PC-3 (cell line): ENCODE measurements at regions of chr16 and their contacts with region 1.

Region 1: GRCh38 chr16:87391950-87392822 is at the start of gene MAP1LC3B:
- DNase-seq: peak; percentile 94
- ATAC-seq: peak; percentile 61
- H3K4me3 ChIP-seq: peak within 1 kb of the TSS; percentile 96
- H3K27ac ChIP-seq: peak within 1 kb of the TSS; percentile 59
- H3K4me1 ChIP-seq: peaks cover 29% of the 10 kb centered on the region
- H3K27me3 ChIP-seq: no peaks in the 10 kb centered on the region
- CTCF ChIP-seq: no peak
- total RNA-seq, gene MAP1LC3B: 11.0 and 11.9 TPM in 2 replicates

Region 2: GRCh38 chr16:87216474-87217275 is 175.5 kb before region 1 on chr16:
- CTCF ChIA-PET with region 1: no interaction called
- POLR2A ChIA-PET with region 1: no interaction called
- intact Hi-C with region 1: no loop called
- DNase-seq: no peak
- ATAC-seq: peak; percentile 68
- H3K4me3 ChIP-seq: no peak overlapping the region
- H3K27ac ChIP-seq: no peak overlapping the region
- H3K4me1 ChIP-seq: peaks cover 8% of the 10 kb centered on the region; the same call in 1 of the 2 replicates
- H3K27me3 ChIP-seq: no peaks in the 10 kb centered on the region
- CTCF ChIP-seq: no peak

Region 3: DNA sequence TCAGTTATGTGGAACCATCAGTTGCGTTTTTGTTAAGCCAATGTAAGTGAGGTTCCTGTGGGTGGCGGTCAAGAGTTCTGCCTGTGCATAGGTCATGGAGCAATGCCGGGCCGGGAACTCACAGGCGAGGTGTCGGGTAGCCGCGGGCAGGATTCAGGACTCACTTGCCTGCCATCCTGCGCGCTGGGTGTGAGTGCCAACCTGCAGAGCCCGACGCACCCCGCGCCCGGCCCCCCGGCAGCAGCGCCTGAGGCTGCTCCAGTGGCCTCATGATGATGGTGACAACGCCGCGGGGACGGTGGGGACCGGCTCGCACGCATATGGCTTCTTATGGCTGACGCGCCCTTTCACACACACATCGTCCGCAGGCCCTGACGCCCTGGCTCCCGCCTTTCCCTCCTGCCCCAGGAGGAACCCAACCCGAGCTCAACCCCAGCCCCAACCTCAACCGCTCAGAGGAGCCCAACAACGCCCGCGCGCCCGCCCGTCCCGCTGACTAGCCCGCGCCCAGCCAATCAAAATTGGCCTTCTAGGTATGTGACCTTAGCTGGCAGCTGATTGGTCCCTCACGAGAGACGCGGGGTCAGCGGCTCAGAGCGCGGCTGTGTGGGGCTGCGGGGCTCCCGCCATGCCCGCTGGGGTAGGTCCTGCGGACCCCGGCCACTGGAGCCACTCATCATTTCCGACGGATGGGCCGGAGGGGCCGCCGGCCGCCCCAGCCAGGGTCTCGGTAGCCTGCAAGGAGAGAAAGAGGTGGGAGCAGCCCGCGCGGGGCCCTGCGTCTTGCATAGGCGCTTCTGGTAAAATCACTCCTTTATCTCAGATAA is 75.0 kb before region 1 on chr16 and contains the start of gene C16orf95:
- CTCF ChIA-PET with region 1: no interaction called
- POLR2A ChIA-PET with region 1: no interaction called
- intact Hi-C with region 1: loop called (anchors 5 kb)
- DNase-seq: peak; percentile 94
- ATAC-seq: peak; percentile 92
- H3K4me3 ChIP-seq: peak within 1 kb of the TSS; percentile 99
- H3K27ac ChIP-seq: peak within 1 kb of the TSS; percentile 90
- H3K4me1 ChIP-seq: peaks cover 8% of the 10 kb centered on the region
- H3K27me3 ChIP-seq: no peaks in the 10 kb centered on the region
- CTCF ChIP-seq: peak; percentile 55
- total RNA-seq, gene C16orf95: 2.4 and 3.3 TPM in 2 replicates

Region 4: DNA sequence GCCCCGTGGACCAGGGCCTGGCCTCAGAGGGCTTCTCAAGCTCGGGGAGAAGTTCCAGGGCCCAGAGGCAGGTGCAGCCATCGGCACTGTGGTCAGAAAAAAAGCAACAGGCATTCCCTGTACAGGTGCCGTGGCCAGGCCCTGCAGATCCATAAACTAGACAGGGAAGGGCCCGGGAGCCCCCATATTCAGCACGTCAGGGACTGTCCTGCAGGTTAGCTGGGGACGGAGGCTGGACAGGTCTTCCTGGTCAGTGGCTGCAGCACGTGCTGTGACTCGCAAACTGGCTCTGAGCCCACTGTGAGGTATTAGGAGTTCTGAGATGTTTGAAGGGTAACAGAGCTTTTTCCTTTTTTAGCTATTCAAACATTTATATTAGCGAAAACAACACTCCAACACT is 60.0 kb before region 1 on chr16:
- CTCF ChIA-PET with region 1: no interaction called
- POLR2A ChIA-PET with region 1: no interaction called
- intact Hi-C with region 1: no loop called
- DNase-seq: peak; percentile 12
- ATAC-seq: no peak
- H3K4me3 ChIP-seq: no peak overlapping the region
- H3K27ac ChIP-seq: no peak overlapping the region
- H3K4me1 ChIP-seq: no peaks in the 10 kb centered on the region
- H3K27me3 ChIP-seq: no peaks in the 10 kb centered on the region
- CTCF ChIP-seq: no peak

Region 5: GRCh38 chr16:87464691-87465300 is 72.6 kb after region 1 on chr16:
- CTCF ChIA-PET with region 1: no interaction called
- POLR2A ChIA-PET with region 1: no interaction called
- intact Hi-C with region 1: no loop called
- DNase-seq: peak; percentile 61
- ATAC-seq: peak; percentile 66
- H3K4me3 ChIP-seq: peak overlapping the region; percentile 51
- H3K27ac ChIP-seq: peak overlapping the region; percentile 87
- H3K4me1 ChIP-seq: peaks cover 36% of the 10 kb centered on the region
- H3K27me3 ChIP-seq: no peaks in the 10 kb centered on the region
- CTCF ChIP-seq: no peak